ENCODE measurements at regions of chr11 and their contacts with region 1.

Region 1: GRCh38 chr11:59550368-59550841 is 39.1 kb downstream of the OR4D9 start:
- DNase-seq: peak; percentile 95 to 97
- H3K4me3 ChIP-seq: peak overlapping the region; percentile 68 to 93 (median 80)
- H3K27ac ChIP-seq: peak overlapping the region; percentile 48; the same call in 1 of the 2 replicates
- H3K4me1 ChIP-seq: peaks cover 0 to 7% (median 0%) of the 10 kb centered on the region in 4 experiments; a peak in 2 of 7 replicates
- H3K27me3 ChIP-seq: no peaks in the 10 kb centered on the region
- CTCF ChIP-seq: peak; percentile 22 to 36 (median 30); a peak in 3 of 4 replicates
- EP300 ChIP-seq: no peak
- POLR2A ChIP-seq: peak in 1 of 2 experiments; percentile 43; a peak in 1 of 3 replicates
- RAD21 ChIP-seq: peak; percentile 14 to 29; a peak in 2 of 4 replicates

Region 2: GRCh38 chr11:59560702-59561469 is 10.5 kb after region 1 on chr11:
- CTCF ChIA-PET with region 1: interaction called, 4 read pairs
- POLR2A ChIA-PET with region 1: interaction called, 19 read pairs
- DNase-seq: peak; percentile 70 to 76
- H3K4me3 ChIP-seq: peak overlapping the region; percentile 86 to 94 (median 90)
- H3K27ac ChIP-seq: no peak overlapping the region
- H3K4me1 ChIP-seq: peaks cover 2 to 5% (median 3%) of the 10 kb centered on the region in 4 experiments; a peak in 6 of 7 replicates
- H3K27me3 ChIP-seq: no peaks in the 10 kb centered on the region; a peak in 1 of 7 replicates
- CTCF ChIP-seq: no peak
- EP300 ChIP-seq: no peak
- POLR2A ChIP-seq: no peak
- RAD21 ChIP-seq: no peak

Measured in H1 (cell line).